Activated CD4-positive, alpha-beta memory T cell treated with anti-CD3 and anti-CD28 coated beads for 36 hours (primary cell): ENCODE measurements at regions of chr1 and their contacts with region 1.

Region 1: DNA sequence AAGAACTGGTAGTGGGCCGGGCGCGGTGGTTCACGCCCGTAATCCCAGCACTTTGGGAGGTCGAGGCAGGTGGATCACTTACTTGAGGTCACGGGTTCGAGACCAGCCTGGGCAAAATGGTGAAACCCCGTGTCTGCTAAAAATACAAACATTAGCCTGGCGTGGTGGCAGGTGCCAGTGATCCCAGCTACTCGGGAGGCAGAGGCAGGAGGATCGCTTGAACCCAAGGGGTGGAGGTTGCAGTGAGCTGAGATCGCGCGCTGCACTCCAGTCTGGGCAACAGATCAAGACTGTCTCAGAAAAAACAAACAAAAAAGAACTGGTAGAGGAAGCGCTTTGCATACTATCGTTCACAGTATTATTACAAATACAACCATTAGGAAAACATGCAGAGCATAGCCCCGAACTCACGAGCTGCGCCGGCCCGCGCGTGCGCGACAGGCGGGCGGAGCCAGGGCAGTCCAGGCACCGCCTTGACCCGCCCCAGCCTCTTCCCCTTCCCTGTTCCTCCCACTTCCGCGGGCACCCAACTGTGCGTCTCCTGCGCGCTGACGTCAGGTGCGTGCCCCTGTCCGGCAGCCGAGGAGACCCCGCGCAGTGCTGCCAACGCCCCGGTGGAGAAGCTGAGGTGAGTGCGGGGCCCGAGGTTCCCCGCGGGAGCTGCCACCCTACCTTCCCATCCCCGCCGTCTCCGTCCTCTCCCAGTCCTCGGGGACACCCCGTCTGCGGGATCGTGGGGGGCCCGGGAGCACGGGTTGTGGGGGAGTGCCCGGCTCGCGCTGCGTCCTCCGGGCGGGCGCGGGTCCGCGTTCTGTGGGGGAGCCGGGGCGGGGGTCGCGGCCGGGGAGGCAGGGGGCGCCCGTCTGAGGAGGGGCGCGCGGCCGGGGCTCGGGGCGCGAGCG is at the start of gene CDC42:
- DNase-seq: peak; percentile 98
- H3K4me3 Mint-ChIP-seq: peak within 1 kb of the TSS; percentile 98
- H3K27ac Mint-ChIP-seq: peak within 1 kb of the TSS; percentile 99
- H3K4me1 Mint-ChIP-seq: peaks cover 53% of the 10 kb centered on the region
- H3K27me3 Mint-ChIP-seq: no peaks in the 10 kb centered on the region
- total RNA-seq, gene CDC42: 310 to 314 TPM

Region 2: DNA sequence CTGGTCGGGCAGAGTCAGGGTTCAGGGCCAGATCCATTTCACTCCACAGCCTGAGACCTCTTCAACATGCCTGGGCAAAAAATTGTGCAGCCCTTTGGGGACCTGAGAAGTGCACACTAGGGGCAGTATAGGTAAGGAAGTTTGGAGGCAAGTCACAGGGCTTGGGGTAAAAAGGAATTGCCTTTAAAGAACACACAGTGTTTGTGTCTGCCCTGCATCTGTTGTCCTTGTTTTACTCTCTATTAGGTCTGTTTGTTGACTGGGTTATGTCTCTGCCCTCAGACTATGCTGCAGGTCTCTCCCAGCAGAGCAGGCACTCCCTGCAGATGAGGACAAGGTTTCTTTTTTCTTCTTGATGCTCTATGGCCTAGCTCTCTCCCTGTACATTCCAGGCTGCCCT is 218.3 kb before region 1 on chr1:
- CTCF ChIA-PET with region 1: no interaction called
- POLR2A ChIA-PET with region 1: no interaction called
- intact Hi-C with region 1: no loop called
- DNase-seq: no peak
- H3K4me3 Mint-ChIP-seq: no peak overlapping the region
- H3K27ac Mint-ChIP-seq: no peak overlapping the region
- H3K4me1 Mint-ChIP-seq: no peaks in the 10 kb centered on the region
- H3K27me3 Mint-ChIP-seq: no peaks in the 10 kb centered on the region

Region 3: DNA sequence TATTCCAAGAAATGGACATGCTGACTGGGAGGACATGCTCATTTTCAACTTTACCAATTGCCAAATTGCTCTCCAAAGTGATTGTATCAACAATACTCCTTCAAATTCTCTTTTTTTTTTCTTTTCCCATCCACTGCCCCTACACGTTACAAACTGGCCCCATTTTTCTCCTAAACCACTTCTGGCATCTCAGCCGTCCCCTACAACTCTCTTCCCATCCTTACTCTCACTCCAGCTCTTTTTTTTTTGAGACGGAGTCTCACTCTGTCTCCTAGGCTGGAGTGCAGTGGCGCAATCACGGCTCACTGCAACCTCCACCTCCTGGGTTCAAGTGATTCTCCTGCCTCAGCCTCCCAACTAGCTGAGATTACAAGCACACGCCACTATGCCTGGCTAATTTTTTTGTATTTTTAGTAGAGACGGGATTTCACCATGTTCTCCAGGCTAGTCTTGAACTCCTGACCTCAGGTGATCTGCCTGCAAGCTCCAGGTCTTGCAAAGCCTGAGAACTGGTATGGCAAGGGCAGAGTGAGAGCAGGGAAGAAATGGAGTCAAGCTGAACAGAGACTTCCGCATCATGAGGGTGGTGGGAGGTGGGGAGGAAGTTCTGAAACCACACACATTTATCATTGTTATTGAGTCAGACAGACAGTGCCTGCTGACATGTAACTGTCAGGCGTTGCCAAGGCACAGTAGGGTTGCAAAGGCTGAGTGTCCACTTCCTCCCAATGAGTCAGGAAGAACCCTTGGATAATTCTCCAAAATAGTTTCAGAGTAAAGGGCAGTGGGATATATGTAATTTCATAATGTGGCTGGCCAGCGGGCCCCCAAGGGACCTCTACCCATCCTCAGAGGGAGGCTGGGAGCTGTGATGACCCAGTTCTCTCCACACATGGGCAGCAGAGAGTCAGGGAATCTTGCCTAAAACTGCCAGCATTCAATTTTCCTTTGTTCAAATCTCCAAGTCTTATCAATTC is 33.5 kb before region 1 on chr1:
- CTCF ChIA-PET with region 1: interaction called, 62 read pairs
- POLR2A ChIA-PET with region 1: interaction called, 78 read pairs
- intact Hi-C with region 1: loop called (anchors 1 kb)
- DNase-seq: peak; percentile 82
- H3K4me3 Mint-ChIP-seq: no peak overlapping the region
- H3K27ac Mint-ChIP-seq: peak overlapping the region; percentile 64
- H3K4me1 Mint-ChIP-seq: peaks cover 26% of the 10 kb centered on the region
- H3K27me3 Mint-ChIP-seq: no peaks in the 10 kb centered on the region

Region 4: GRCh38 chr1:22039594-22040285 is 12.6 kb before region 1 on chr1:
- CTCF ChIA-PET with region 1: interaction called, 20 read pairs
- POLR2A ChIA-PET with region 1: interaction called, 58 read pairs
- intact Hi-C with region 1: loop called (anchors 1 kb)
- DNase-seq: peak; percentile 95
- H3K4me3 Mint-ChIP-seq: peak overlapping the region; percentile 69
- H3K27ac Mint-ChIP-seq: peak overlapping the region; percentile 97
- H3K4me1 Mint-ChIP-seq: peaks cover 53% of the 10 kb centered on the region
- H3K27me3 Mint-ChIP-seq: no peaks in the 10 kb centered on the region

Region 5: GRCh38 chr1:22089787-22090186 is 37.4 kb after region 1 on chr1:
- CTCF ChIA-PET with region 1: interaction called, 3 read pairs
- POLR2A ChIA-PET with region 1: interaction called, 5 read pairs
- intact Hi-C with region 1: loop called (anchors 2 kb)
- DNase-seq: no peak
- H3K4me3 Mint-ChIP-seq: peak overlapping the region; percentile 36
- H3K27ac Mint-ChIP-seq: peak overlapping the region; percentile 87
- H3K4me1 Mint-ChIP-seq: peaks cover 88% of the 10 kb centered on the region
- H3K27me3 Mint-ChIP-seq: no peaks in the 10 kb centered on the region

Region 6: GRCh38 chr1:22289307-22289995 is 237.1 kb after region 1 on chr1:
- CTCF ChIA-PET with region 1: no interaction called
- POLR2A ChIA-PET with region 1: no interaction called
- intact Hi-C with region 1: no loop called
- DNase-seq: no peak
- H3K4me3 Mint-ChIP-seq: no peak overlapping the region
- H3K27ac Mint-ChIP-seq: no peak overlapping the region
- H3K4me1 Mint-ChIP-seq: no peaks in the 10 kb centered on the region
- H3K27me3 Mint-ChIP-seq: peaks cover 5% of the 10 kb centered on the region